Common myeloid progenitor, CD34-positive (primary cell): ENCODE measurements at regions of chr11 and their contacts with region 1.

Region 1: GRCh38 chr11:104700609-104701008 is 197.7 kb downstream of the CASP12 start:
- DNase-seq: peak in 2 of 3 donors; percentile 31 to 45
- H3K4me3 ChIP-seq: no peak overlapping the region
- H3K27ac ChIP-seq: no peak overlapping the region
- H3K4me1 ChIP-seq: peaks cover 12 to 25% (median 19%) of the 10 kb centered on the region in 4 experiments
- H3K27me3 ChIP-seq: no peaks in the 10 kb centered on the region

Region 2: DNA sequence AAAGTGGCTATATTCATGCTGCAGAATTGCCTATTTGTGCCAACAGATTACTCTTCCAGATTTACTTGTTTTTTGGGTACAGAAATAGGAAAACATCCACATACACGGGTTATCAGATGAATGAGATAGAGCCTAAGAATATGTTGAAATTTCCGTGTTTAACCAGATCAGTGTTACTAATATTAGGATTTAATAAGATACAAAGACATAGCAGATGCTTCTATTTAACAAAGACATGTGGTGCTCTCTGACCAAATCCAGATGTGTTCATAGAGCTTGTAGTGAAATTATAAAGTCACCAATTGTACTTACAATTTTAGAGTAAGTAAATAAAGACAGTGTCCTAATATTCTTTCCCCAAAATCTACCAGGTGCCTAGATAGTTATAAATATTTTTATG is 10.4 kb before region 1 on chr11:
- CTCF ChIA-PET with region 1: interaction called, 10 read pairs
- POLR2A ChIA-PET with region 1: no interaction called
- DNase-seq: no peak
- H3K4me3 ChIP-seq: no peak overlapping the region
- H3K27ac ChIP-seq: no peak overlapping the region
- H3K4me1 ChIP-seq: peaks cover 4 to 24% (median 19%) of the 10 kb centered on the region in 4 experiments
- H3K27me3 ChIP-seq: no peaks in the 10 kb centered on the region